WTC11 (cell line): ENCODE measurements at regions of chr4 and their contacts with region 1.

Region 1: DNA sequence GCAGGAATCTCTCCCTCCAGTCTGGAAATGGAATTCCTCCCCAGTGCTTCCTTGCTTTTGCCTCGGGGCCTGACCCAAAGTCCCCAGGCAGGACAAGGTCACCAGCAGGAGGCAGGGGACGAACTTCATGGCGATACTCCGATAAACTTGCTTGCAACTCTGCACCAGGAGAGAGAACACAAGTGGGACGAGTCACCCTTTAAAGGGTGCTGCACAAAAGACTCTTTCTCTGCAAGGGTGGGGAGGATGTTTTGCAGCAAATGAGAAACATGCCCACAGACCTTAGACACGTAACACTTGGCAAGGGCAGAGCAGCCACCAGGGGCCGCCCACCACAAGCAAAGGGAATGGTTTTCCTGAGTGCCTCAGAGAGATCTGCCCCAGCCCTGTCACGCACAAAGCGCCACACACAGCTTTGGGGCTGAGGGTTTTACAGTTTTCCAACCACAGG is at the start of gene FGFBP2:
- DNase-seq: peak; percentile 73
- ATAC-seq: peak; percentile 88
- H3K4me3 Mint-ChIP-seq: no peak within 1 kb of the TSS
- H3K27ac Mint-ChIP-seq: no peak within 1 kb of the TSS
- H3K4me1 Mint-ChIP-seq: peaks cover 15% of the 10 kb centered on the region
- H3K27me3 Mint-ChIP-seq: no peaks in the 10 kb centered on the region; the same call in 1 of the 2 replicates
- CTCF ChIP-seq: 0 out of 2 replicates have a peak, but pooled peaks have one; percentile 28
- total RNA-seq, gene FGFBP2: 0.24 TPM in 1 of 3 replicates, not detected in the others

Region 2: DNA sequence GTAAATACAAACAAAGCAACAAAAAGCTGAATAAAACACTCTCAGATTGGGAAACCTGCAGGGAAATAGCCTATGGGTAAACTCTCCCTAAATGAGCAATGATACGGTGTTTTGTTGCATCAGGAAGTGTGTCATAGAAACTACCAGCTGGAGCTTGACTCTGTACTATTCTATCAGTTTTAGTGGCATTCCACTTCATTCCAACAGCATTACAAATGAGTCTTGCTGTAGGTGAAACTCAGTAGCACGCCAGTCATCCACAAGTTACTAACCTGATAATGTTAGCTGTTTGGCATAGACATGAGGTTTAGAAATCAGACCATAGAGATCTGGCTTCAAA is 49.4 kb before region 1 on chr4:
- CTCF ChIA-PET with region 1: no interaction called
- POLR2A ChIA-PET with region 1: no interaction called
- DNase-seq: no peak
- ATAC-seq: no peak
- H3K4me3 Mint-ChIP-seq: no peak overlapping the region
- H3K27ac Mint-ChIP-seq: no peak overlapping the region
- H3K4me1 Mint-ChIP-seq: no peaks in the 10 kb centered on the region
- H3K27me3 Mint-ChIP-seq: no peaks in the 10 kb centered on the region; the same call in 1 of the 2 replicates
- CTCF ChIP-seq: no peak

Region 3: DNA sequence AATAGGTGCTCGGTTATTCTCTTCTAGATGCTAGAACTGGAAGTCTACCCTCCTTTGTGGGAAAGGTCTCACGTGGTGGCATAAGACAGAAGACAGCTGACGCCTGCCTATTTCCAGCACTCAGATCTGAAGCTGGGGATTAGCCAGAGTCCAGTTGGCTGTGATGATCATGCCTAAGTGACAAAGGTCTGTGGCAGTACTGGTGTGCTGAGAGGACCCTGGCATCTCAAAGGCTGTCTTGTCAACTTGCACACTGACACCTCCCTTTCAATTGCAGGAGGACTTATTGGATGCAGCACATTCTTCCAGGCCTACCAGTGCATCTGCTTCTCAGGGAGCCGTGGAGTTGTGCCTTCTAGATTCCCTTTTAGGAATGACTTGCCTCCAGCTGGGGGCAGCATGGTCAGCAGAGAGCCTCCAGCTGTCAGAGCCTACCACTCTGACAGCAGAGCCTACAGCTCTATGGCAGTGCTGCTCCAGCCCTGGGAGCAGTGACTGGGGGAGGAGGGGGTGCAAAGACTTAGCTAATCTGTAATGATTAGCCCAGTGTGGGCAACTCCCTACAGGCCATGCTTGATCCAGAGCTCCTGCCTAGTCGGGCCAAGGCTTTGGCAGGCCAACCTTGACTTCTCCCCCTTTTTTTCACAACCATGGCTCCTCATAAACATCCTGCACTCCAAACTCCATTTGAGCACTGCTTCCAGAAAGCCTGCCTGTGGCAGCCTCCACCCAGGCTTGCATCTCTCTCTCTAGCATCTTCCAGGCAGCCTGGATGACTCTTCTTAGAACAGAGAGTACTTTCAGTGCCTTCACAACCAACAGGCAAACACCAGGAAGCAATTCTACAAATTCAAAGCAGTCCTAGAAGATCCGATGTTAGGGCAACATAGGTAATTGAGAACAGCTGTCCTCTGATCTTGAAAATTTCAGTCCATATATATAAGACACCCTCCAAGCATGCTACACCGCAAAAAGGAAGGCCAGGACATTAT is 13.7 kb after region 1 on chr4:
- CTCF ChIA-PET with region 1: interaction called, 15 read pairs
- POLR2A ChIA-PET with region 1: no interaction called
- DNase-seq: peak; percentile 27
- ATAC-seq: peak; percentile 88
- H3K4me3 Mint-ChIP-seq: no peak overlapping the region
- H3K27ac Mint-ChIP-seq: no peak overlapping the region
- H3K4me1 Mint-ChIP-seq: peaks cover 5% of the 10 kb centered on the region
- H3K27me3 Mint-ChIP-seq: no peaks in the 10 kb centered on the region
- CTCF ChIP-seq: no peak

Region 4: GRCh38 chr4:16264798-16265197 is 301.8 kb after region 1 on chr4:
- CTCF ChIA-PET with region 1: interaction called, 34 read pairs
- POLR2A ChIA-PET with region 1: no interaction called
- DNase-seq: no peak
- ATAC-seq: no peak
- H3K4me3 Mint-ChIP-seq: no peak overlapping the region
- H3K27ac Mint-ChIP-seq: no peak overlapping the region
- H3K4me1 Mint-ChIP-seq: no peaks in the 10 kb centered on the region
- H3K27me3 Mint-ChIP-seq: no peaks in the 10 kb centered on the region
- CTCF ChIP-seq: no peak